ENCODE measurements at regions of chr5 and their contacts with region 1.

Region 1: GRCh38 chr5:98928873-98929696 is at the start of gene CHD1:
- DNase-seq: peak; percentile 93
- ATAC-seq: peak; percentile 66
- H3K4me3 Mint-ChIP-seq: peak within 1 kb of the TSS; percentile 99
- H3K27ac Mint-ChIP-seq: peak within 1 kb of the TSS; percentile 99
- H3K4me1 Mint-ChIP-seq: peaks cover 39% of the 10 kb centered on the region
- H3K27me3 Mint-ChIP-seq: no peaks in the 10 kb centered on the region
- total RNA-seq, gene CHD1: 49.1 to 57.3 TPM

Region 2: DNA sequence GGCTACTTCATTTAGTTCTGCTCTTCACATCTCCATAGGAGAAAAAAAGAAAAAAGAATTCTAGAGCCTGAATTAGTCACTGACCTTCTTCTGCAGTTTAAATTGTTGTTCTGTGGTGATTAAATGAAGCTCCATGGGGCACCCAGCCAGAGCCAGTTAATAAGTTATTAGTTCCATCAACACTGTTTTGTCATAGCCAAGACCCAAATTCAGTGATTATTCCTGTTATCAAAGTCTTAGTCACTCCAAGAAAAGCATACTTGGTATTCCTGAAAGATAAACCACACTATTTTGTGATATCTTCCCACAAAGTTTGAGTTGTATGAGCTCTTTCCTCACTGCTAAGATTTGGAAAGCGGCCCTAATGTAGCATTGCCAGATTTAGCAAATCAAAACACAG is 290.4 kb before region 1 on chr5:
- POLR2A ChIA-PET with region 1: no interaction called
- DNase-seq: no peak
- ATAC-seq: no peak
- H3K4me3 Mint-ChIP-seq: no peak overlapping the region
- H3K27ac Mint-ChIP-seq: no peak overlapping the region
- H3K4me1 Mint-ChIP-seq: no peaks in the 10 kb centered on the region
- H3K27me3 Mint-ChIP-seq: peaks cover 2% of the 10 kb centered on the region

Region 3: DNA sequence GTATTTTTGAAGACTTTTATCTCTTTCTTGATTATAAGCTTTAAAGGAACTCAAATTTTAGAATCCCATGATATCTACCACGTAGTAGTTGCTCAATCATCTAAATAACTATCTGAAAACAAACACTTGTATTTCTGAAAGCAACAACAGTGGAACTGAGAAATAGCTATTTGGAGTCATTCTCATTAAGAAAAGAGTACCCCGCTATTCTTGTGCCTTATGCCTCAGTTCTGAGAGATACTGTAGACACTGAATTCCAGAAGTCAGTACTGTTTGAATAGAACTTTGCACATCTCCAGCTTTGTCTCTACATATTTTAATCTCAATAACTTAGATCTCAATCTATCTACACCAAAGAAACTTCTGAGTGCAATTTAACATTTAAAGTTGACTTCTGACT is 11.7 kb before region 1 on chr5:
- POLR2A ChIA-PET with region 1: interaction called, 13 read pairs
- DNase-seq: no peak
- ATAC-seq: no peak
- H3K4me3 Mint-ChIP-seq: no peak overlapping the region
- H3K27ac Mint-ChIP-seq: no peak overlapping the region
- H3K4me1 Mint-ChIP-seq: peaks cover 28% of the 10 kb centered on the region
- H3K27me3 Mint-ChIP-seq: no peaks in the 10 kb centered on the region

Region 4: GRCh38 chr5:99032234-99033013 is 103.3 kb after region 1 on chr5:
- POLR2A ChIA-PET with region 1: interaction called, 27 read pairs
- DNase-seq: no peak
- ATAC-seq: peak; percentile 25
- H3K4me3 Mint-ChIP-seq: peak overlapping the region; percentile 89
- H3K27ac Mint-ChIP-seq: peak overlapping the region; percentile 97
- H3K4me1 Mint-ChIP-seq: peaks cover 27% of the 10 kb centered on the region
- H3K27me3 Mint-ChIP-seq: no peaks in the 10 kb centered on the region

Region 5: GRCh38 chr5:99037668-99038067 is 108.6 kb after region 1 on chr5:
- POLR2A ChIA-PET with region 1: interaction called, 27 read pairs
- DNase-seq: peak; percentile 64
- ATAC-seq: peak; percentile 74
- H3K4me3 Mint-ChIP-seq: peak overlapping the region; percentile 43
- H3K27ac Mint-ChIP-seq: peak overlapping the region; percentile 59
- H3K4me1 Mint-ChIP-seq: peaks cover 27% of the 10 kb centered on the region
- H3K27me3 Mint-ChIP-seq: no peaks in the 10 kb centered on the region

Measured in activated naive CD8-positive, alpha-beta T cell treated with anti-CD3 and anti-CD28 coated beads, Interleukin-2, amount 10 ng/mL, durations not matched to agents 7 days and 5 days (primary cell).